ENCODE measurements at regions of chr5 and their contacts with region 1.

Region 1: GRCh38 chr5:59673438-59674058 is 220.0 kb downstream of the PDE4D start:
- DNase-seq: peak in 1 of 2 experiments; percentile 52
- H3K4me3 ChIP-seq: no peak overlapping the region
- H3K4me3 Mint-ChIP-seq: no peak overlapping the region
- H3K27ac Mint-ChIP-seq: no peak overlapping the region
- H3K4me1 ChIP-seq: no peaks in the 10 kb centered on the region
- H3K4me1 Mint-ChIP-seq: no peaks in the 10 kb centered on the region
- H3K27me3 ChIP-seq: no peaks in the 10 kb centered on the region
- H3K27me3 Mint-ChIP-seq: peaks cover 2% of the 10 kb centered on the region
- CTCF ChIP-seq: peak; percentile 75 to 84

Region 2: GRCh38 chr5:59525959-59526358 is 147.6 kb before region 1 on chr5:
- CTCF ChIA-PET with region 1: interaction called, 3 read pairs
- POLR2A ChIA-PET with region 1: no interaction called
- intact Hi-C with region 1: loop called (anchors 5 kb)
- DNase-seq: no peak
- H3K4me3 ChIP-seq: no peak overlapping the region
- H3K4me3 Mint-ChIP-seq: no peak overlapping the region
- H3K27ac Mint-ChIP-seq: no peak overlapping the region
- H3K4me1 ChIP-seq: peaks cover 21% of the 10 kb centered on the region
- H3K4me1 Mint-ChIP-seq: peaks cover 11% of the 10 kb centered on the region
- H3K27me3 ChIP-seq: no peaks in the 10 kb centered on the region
- H3K27me3 Mint-ChIP-seq: no peaks in the 10 kb centered on the region
- CTCF ChIP-seq: no peak

Region 3: DNA sequence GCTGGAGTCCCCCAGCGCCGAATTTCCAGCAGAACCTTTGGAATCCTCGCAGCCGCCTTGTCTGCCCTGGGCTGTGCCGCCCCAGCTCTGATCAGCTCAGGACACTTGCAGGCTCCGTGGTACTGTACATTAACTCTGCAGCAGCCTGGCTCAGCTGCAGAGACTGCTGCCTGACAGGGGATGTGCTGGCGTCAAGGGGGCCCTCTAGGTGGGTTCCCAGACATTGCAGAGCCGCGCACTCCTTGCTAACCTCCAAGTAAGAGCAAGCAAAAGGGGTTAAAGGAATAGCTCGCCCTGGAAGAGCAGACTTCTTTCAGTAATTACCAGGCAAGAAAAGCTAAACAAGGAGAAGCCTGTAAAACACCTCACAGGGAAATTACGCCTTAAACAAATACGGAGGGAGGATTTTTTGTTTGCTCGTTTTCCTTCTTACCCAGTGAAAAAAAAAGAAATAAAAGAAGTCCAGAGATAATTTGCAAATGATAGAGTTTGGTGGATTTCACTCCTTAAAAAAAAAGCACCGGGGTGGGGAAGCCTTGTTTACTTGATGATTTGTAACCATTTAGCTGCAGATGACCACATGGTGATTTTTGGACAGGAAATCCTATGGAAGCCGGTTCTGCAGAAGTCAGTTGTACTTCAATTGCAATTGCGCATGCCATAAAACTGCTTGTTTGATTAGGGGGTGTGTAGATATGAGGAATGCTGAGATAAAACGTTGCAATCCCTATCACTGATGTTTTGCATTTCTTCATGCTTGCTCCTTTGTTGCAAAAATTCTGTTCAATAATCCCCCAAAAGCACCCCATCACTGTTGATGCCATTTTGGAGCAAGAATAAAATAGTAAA is 85.8 kb before region 1 on chr5:
- CTCF ChIA-PET with region 1: no interaction called
- POLR2A ChIA-PET with region 1: no interaction called
- intact Hi-C with region 1: loop called (anchors 5 kb)
- DNase-seq: peak; percentile 71 to 76
- H3K4me3 ChIP-seq: peak overlapping the region; percentile 27
- H3K4me3 Mint-ChIP-seq: peak overlapping the region; percentile 73
- H3K27ac Mint-ChIP-seq: peak overlapping the region; percentile 8
- H3K4me1 ChIP-seq: peaks cover 29% of the 10 kb centered on the region
- H3K4me1 Mint-ChIP-seq: peaks cover 15% of the 10 kb centered on the region
- H3K27me3 ChIP-seq: no peaks in the 10 kb centered on the region
- H3K27me3 Mint-ChIP-seq: no peaks in the 10 kb centered on the region
- CTCF ChIP-seq: peak; percentile 21 to 57

Region 4: DNA sequence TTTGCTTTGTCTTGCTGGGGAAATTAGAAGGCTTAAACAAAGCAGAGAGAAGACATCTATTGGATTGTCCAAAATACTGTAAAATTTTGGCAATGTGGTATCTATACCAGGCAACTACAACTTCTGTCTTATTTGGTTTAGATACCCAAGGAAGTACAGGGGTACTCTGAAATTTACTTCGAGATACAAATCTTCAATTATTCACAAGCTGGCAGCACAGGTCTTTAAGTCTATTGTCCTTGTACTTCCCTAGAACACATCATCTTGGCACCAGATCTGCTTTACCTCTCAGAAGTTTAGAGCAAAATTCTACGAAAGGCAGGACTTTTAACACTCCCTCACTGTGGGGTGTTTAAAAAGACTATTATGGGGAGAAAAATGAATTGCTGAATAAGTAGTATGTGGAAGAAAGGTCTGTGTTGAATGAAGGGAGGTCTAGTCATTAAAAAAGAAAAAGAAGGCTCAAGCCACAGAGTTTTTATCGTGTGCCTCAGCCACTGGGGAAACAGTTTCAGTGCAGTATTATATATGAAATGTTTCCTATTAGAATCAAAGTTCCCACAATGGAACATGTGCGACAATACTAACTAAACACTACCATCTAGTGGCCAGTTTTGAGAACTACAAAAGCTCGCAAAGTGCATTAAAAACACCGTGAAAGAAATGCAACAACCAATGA is 126.3 kb after region 1 on chr5:
- CTCF ChIA-PET with region 1: interaction called, 5 read pairs
- POLR2A ChIA-PET with region 1: no interaction called
- intact Hi-C with region 1: loop called (anchors 2 kb)
- DNase-seq: peak in 1 of 2 experiments; percentile 56
- H3K4me3 ChIP-seq: no peak overlapping the region
- H3K4me3 Mint-ChIP-seq: no peak overlapping the region
- H3K27ac Mint-ChIP-seq: no peak overlapping the region
- H3K4me1 ChIP-seq: no peaks in the 10 kb centered on the region
- H3K4me1 Mint-ChIP-seq: no peaks in the 10 kb centered on the region
- H3K27me3 ChIP-seq: no peaks in the 10 kb centered on the region; the same call in 1 of the 2 replicates
- H3K27me3 Mint-ChIP-seq: peaks cover 15% of the 10 kb centered on the region
- CTCF ChIP-seq: peak; percentile 63 to 70